Activated naive CD4-positive, alpha-beta T cell treated with anti-CD3 and anti-CD28 coated beads for 36 hours (primary cell): ENCODE measurements at regions of chr1 and their contacts with region 1.

Region 1: GRCh38 chr1:1919304-1920056 is 401 bp upstream of the TMEM52 start:
- DNase-seq: peak; percentile 99
- H3K4me3 Mint-ChIP-seq: peak overlapping the region; percentile 67
- H3K27ac Mint-ChIP-seq: no peak overlapping the region
- H3K4me1 Mint-ChIP-seq: peaks cover 4% of the 10 kb centered on the region
- H3K27me3 Mint-ChIP-seq: no peaks in the 10 kb centered on the region

Region 2: DNA sequence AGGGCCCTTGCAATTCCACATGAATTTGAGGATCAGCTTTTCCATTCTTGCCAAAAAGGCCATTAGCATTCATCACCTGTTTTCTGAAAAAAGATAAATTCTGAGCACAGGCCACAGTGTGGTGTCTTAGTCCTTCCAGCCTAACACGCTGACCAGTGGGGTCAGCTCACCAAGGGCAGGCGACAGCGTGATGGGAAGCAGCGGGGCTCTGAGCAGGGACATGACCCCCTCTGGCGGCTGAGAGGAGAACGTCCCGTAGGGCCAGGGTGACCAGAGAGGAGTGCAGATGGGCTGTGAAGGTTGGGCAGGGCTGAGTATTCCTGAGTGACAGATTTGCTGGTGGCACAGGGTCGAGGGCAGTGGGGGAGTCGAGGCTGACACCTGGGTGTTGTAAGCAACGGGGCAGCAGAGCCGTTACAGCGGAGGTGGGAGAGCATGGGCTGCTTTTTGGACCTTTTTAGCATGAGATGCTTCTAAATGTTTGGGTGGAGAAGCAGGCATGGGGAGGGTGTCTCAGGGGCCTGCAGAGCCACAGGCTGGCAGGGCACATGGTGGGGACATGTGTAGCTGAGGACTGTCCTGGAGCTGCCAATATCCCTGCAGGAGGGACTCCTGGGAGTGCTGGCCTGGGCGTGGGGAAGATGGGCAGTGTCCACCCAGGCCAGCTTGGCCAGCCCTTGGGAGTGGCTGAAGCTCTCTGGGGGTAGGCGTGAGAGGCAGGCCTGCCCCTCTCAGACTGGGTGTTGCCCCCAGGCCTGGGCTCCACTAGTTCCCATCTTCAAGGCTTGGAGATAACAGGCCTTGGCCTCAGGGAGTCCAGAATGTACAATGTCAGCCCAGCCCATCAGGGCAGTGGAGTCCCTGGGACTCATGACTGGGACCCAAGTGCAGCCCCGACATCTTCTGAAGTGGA is 13.0 kb before region 1 on chr1:
- CTCF ChIA-PET with region 1: interaction called, 3 read pairs
- intact Hi-C with region 1: loop called (anchors 1 kb)
- DNase-seq: peak; percentile 81
- H3K4me3 Mint-ChIP-seq: peak overlapping the region; percentile 5
- H3K27ac Mint-ChIP-seq: peak overlapping the region; percentile 11
- H3K4me1 Mint-ChIP-seq: peaks cover 16% of the 10 kb centered on the region
- H3K27me3 Mint-ChIP-seq: no peaks in the 10 kb centered on the region

Region 3: DNA sequence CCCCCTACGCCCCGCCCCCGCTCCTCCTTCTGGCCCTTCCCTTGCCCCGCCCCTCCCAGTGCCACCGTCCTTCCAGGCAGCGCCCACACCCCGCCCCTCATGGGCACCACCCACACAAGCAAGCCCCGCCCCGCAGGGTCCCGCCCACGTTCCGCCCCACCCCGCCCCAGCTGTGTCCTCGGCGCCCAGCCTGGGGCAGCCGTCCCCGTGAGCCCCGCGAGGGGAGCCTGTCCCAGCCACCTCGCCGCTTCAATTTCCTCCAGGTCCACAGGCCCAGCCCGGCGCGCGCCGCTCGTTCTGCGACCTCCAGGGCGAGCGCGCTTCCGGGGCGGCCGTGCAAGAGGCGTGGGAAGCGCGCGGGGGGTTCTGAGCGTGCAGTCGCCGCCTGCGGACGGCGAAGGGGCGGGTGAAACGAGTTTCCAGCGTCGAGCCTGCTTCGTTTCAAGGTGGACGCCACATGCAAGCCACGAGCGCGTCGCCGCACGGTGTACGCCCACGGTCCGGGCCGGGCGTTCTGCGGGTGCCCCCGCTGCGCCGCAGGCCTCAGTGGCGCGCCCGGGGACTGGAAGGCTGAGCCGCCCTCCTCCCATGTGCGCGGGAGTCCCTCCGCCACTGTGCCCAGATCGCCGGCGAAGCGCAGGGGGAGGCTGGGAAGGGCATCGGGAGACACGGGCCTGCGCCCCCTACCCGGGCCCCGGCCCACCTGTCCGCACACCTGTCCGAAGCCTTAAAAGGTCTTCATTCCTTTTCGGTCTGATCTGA is 285.9 kb after region 1 on chr1:
- CTCF ChIA-PET with region 1: no interaction called
- intact Hi-C with region 1: loop called (anchors 1 kb)
- DNase-seq: peak; percentile 96
- H3K4me3 Mint-ChIP-seq: peak overlapping the region; percentile 52
- H3K27ac Mint-ChIP-seq: no peak overlapping the region
- H3K4me1 Mint-ChIP-seq: no peaks in the 10 kb centered on the region
- H3K27me3 Mint-ChIP-seq: no peaks in the 10 kb centered on the region

Region 4: GRCh38 chr1:2304921-2305681 is 385.6 kb after region 1 on chr1:
- CTCF ChIA-PET with region 1: no interaction called
- intact Hi-C with region 1: no loop called
- DNase-seq: no peak
- H3K4me3 Mint-ChIP-seq: no peak overlapping the region
- H3K27ac Mint-ChIP-seq: no peak overlapping the region
- H3K4me1 Mint-ChIP-seq: peaks cover 23% of the 10 kb centered on the region
- H3K27me3 Mint-ChIP-seq: no peaks in the 10 kb centered on the region

Region 5: GRCh38 chr1:2391041-2391930 is 471.8 kb after region 1 on chr1 and contains the starts of genes MORN1 and RER1:
- CTCF ChIA-PET with region 1: no interaction called
- intact Hi-C with region 1: loop called (anchors 1 kb)
- DNase-seq: peak; percentile 99
- H3K4me3 Mint-ChIP-seq: peak within 1 kb of the TSS; percentile 88
- H3K27ac Mint-ChIP-seq: peak within 1 kb of the TSS; percentile 79
- H3K4me1 Mint-ChIP-seq: peaks cover 40% of the 10 kb centered on the region
- H3K27me3 Mint-ChIP-seq: no peaks in the 10 kb centered on the region
- total RNA-seq, gene MORN1: 3.2 to 4.9 TPM
- total RNA-seq, gene RER1: 115 to 124 TPM